Esophagus squamous epithelium (tissue), 5 donors: ENCODE measurements at regions of chr11 and their contacts with region 1.

Region 1: DNA sequence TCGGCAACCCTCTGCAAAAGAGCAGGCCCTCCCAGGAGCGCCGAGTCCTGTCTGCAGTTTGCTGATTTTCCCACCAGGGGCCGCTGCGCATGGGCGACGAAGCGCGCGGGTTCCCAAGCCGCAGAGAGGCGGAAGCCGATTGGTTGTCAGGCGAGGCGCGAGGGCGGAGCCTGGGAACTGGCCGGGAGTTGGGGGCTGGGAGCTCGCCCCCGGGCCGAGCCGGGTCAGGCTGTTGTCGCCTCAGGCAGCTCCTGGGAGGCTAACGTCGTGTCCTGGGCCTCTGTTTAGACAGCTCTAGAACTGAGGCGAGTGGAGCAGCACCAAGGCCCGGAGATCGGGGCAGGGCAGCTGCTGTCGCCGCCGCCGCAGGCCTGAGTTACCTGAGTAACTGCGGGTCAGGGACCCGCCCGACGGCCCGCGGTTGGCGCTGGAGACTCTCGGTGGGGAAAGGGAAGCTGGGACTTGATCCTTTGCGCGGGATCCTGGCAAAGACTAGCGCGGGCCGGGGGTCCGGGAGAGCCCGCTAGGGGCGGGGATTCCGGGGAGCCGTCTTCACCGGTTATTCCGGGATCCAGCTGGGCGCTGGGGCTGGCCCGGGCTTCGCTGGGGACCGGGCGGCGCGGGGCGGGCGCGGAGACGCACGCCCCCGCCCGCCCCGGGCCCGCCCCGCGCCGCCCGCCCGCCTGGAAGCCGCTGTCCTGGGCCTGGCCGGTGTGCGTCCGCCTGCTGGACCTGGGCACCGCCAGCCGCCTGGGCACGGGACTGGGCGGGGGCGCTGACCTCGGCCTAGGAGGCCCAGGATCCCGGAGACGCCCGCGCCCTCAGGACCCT is at the start of gene STIM1:
- DNase-seq: peak; percentile 77
- H3K4me3 ChIP-seq: peak within 1 kb of the TSS; percentile 65 to 98 (median 92)
- H3K27ac ChIP-seq: peak within 1 kb of the TSS; percentile 95 to 100 (median 99)
- H3K4me1 ChIP-seq: peaks cover 27 to 69% (median 49%) of the 10 kb centered on the region in 3 donors
- H3K27me3 ChIP-seq: no peaks in the 10 kb centered on the region
- CTCF ChIP-seq: peak; percentile 97 to 100 (median 99)
- POLR2A ChIP-seq: peak in 3 of 4 donors; percentile 16 to 84 (median 54)
- total RNA-seq, gene STIM1: 50.1 to 112 (median 63.3) TPM

Region 2: DNA sequence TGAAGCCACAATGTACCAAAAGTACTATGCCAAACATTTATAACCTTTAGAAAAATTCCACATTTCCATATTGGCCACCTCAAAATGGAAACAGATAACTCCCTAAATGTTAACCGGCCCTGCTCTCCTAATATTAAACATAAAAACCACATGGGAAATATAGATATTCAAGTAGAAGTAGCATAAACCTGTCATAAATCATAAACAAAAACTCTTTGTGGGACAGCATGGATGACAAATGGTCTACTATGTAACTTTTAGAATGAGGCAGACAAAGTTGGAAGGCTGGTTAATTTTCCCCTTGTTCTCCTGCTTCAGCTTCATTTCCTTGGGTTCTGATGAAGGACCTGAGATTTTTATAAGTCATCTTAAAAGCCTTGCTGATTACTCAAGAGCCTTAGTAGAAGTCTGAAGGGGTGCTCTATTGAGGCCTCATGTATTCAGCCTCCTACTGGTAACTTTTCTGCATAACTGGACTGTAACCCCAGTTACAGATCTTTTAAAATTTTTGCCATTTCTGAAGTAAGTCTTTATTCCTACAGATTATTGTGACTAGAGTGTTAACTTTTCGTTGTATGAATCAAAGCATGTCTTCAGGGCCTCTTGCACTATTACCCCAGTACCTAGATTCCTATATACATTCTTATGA is 116.7 kb after region 1 on chr11:
- intact Hi-C with region 1: no loop called
- DNase-seq: no peak
- H3K4me3 ChIP-seq: no peak overlapping the region
- H3K27ac ChIP-seq: peak overlapping the region; percentile 53 to 80 (median 66)
- H3K4me1 ChIP-seq: peaks cover 0 to 65% (median 23%) of the 10 kb centered on the region in 3 donors
- H3K27me3 ChIP-seq: no peaks in the 10 kb centered on the region
- CTCF ChIP-seq: peak in 2 of 6 experiments; percentile 21 to 30
- POLR2A ChIP-seq: no peak

Region 3: DNA sequence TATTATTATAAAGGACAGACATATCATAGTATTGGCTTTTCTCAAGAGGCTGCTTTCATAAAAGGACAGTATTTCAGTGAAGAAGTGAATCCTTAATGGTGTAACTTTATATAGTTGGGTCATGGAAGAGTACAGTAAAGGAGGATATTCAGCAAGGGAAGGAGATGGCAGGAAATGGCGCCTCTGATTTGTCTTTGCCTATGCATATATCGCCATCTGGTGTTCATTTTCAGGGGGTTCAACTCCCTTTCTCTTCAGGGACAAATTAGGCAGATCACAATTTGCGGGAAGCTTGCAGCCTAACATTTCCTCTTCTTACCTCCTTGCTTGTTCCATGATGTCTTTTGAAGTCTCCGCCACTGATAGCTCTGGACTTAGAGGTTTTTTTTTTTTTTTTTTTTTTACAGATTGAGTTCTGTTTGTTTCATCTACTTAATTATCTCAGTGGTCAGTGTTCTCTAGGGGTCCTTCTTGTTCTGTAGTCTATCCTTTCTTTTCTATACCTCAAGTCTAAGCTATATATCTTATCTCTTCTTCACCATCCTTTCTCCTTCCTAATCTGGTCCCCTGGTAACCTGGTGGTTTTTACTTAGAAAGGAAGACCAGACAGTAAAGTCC is 217.6 kb after region 1 on chr11:
- intact Hi-C with region 1: loop called (anchors 5 kb)
- DNase-seq: no peak
- H3K4me3 ChIP-seq: no peak overlapping the region
- H3K27ac ChIP-seq: peak overlapping the region in 2 of 4 donors; percentile 49 to 65
- H3K4me1 ChIP-seq: peaks cover 0 to 56% (median 12%) of the 10 kb centered on the region in 3 donors
- H3K27me3 ChIP-seq: no peaks in the 10 kb centered on the region
- CTCF ChIP-seq: peak; percentile 80 to 94 (median 90)
- POLR2A ChIP-seq: no peak